K562 (cell line): ENCODE measurements at regions of chr17 and their contacts with region 1.

Region 1: GRCh38 chr17:19237389-19238166 is 412 bp downstream of the EPN2 start:
- DNase-seq: peak in 3 of 4 experiments; percentile 25 to 65 (median 64)
- ATAC-seq: peak; percentile 92
- H3K4me3 ChIP-seq: peak overlapping the region; percentile 84
- H3K27ac ChIP-seq: peak overlapping the region; percentile 69
- H3K4me1 ChIP-seq: peaks cover 9 to 11% of the 10 kb centered on the region in 2 experiments
- H3K27me3 ChIP-seq: no peaks in the 10 kb centered on the region
- CTCF ChIP-seq: peak in 2 of 3 experiments; percentile 12 to 28; a peak in 1 of 6 replicates
- EP300 ChIP-seq: no peak
- POLR2A ChIP-seq: peak; percentile 61
- RAD21 ChIP-seq: no peak

Region 2: DNA sequence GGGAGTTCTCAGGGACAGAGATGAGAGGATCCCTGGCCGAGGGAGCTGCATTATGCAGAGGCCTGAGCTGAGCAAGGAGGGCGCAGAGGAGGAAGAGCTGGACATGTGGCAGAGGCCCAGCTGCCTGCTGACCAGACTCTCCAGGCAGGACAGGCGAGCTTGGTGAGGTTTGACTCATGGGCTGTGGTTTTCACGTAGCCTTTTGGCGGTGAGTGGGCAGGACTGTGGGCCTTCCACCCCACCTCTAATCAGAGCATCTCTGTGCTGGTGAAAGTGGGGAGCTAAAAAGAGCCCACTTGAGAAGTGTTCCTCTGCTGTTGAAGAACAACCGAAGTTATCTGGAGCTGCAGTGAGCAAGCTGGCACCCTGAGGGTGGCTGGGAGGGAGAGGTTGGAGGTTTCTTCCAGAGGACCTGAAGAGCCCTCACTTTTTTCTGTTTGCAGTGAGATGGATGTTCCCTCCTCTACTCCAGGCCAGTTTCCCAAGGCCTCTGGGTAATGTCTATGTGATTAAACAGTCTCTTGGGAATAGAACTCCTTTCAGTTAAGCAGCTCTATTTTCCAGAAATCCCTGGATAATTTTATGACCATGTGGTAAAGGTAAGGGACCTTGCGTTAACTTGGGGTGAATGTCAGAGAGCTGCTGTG is 11.5 kb after region 1 on chr17:
- CTCF ChIA-PET with region 1: no interaction called
- POLR2A ChIA-PET with region 1: interaction called, 16 read pairs
- in situ Hi-C with region 1: no loop called
- intact Hi-C with region 1: no loop called
- DNase-seq: peak in 1 of 4 experiments; percentile 18
- ATAC-seq: peak; percentile 49
- H3K4me3 ChIP-seq: no peak overlapping the region
- H3K27ac ChIP-seq: no peak overlapping the region; the same call in 2 of the 3 replicates
- H3K4me1 ChIP-seq: peaks cover 12 to 28% of the 10 kb centered on the region in 2 experiments; a peak in 4 of 5 replicates
- H3K27me3 ChIP-seq: no peaks in the 10 kb centered on the region
- CTCF ChIP-seq: no peak
- EP300 ChIP-seq: no peak
- POLR2A ChIP-seq: no peak
- RAD21 ChIP-seq: no peak